Activated CD4-positive, alpha-beta memory T cell treated with anti-CD3 and anti-CD28 coated beads for 36 hours (primary cell): ENCODE measurements at regions of chr14 and their contacts with region 1.

Region 1: GRCh38 chr14:100375963-100376735 is 53.0 kb downstream of the SLC25A47 start:
- DNase-seq: peak; percentile 96
- H3K4me3 Mint-ChIP-seq: peak within 1 kb of the TSS; percentile 98
- H3K27ac Mint-ChIP-seq: peak within 1 kb of the TSS; percentile 100
- H3K4me1 Mint-ChIP-seq: peaks cover 47% of the 10 kb centered on the region
- H3K27me3 Mint-ChIP-seq: peaks cover 1% of the 10 kb centered on the region

Region 2: GRCh38 chr14:100062590-100062989 is 313.6 kb before region 1 on chr14:
- CTCF ChIA-PET with region 1: interaction called, 3 read pairs
- POLR2A ChIA-PET with region 1: interaction called, 16 read pairs
- intact Hi-C with region 1: loop called (anchors 2 kb)
- DNase-seq: peak; percentile 78
- H3K4me3 Mint-ChIP-seq: peak overlapping the region; percentile 69
- H3K27ac Mint-ChIP-seq: peak overlapping the region; percentile 98
- H3K4me1 Mint-ChIP-seq: peaks cover 80% of the 10 kb centered on the region
- H3K27me3 Mint-ChIP-seq: no peaks in the 10 kb centered on the region

Region 3: DNA sequence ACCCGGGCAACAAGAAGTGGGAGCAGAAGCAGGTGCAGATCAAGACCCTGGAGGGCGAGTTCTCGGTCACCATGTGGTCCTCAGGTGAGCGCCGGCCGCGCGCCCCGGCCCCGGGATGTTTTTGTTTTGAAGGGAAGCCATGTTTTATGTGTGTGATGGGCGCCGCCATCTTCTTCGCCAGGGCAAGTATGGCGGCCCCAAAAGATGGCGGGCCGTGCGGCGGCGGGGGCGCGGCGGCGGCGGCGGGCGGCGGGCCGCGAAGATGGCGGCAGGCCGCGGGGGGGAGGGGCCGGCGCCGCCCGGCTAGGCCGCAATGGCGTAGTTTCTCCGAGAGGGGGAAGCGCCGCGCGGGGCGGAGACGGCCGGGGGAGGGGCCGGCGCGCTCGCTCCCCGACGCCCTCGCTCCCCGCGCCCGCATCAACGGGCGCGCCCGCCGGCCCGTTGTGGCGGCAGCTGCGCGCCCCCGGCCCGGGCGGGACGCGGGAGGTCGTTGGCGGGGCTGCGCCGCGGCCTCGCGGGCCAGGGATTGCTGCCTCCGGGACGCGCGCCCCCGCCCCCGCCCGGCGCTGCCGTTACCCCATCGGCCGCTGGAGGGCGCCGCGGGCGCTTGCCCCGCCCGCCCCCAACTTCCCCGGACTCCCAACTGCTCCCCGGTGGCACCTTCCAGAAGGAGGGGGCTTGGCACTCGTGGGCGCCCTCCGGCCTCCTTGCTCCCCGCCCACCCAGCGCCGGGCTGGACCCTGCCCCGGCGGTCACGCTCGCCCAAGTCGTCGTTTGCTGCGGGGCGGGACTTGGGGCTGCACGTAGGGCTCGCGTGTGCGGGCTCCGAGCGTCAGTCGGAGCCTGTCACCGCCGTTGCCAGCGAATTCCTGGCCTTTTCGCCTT is 136.1 kb before region 1 on chr14:
- CTCF ChIA-PET with region 1: interaction called, 7 read pairs
- POLR2A ChIA-PET with region 1: interaction called, 13 read pairs
- intact Hi-C with region 1: loop called (anchors 1 kb)
- DNase-seq: peak; percentile 90
- H3K4me3 Mint-ChIP-seq: peak overlapping the region; percentile 81
- H3K27ac Mint-ChIP-seq: peak overlapping the region; percentile 89
- H3K4me1 Mint-ChIP-seq: peaks cover 54% of the 10 kb centered on the region
- H3K27me3 Mint-ChIP-seq: peaks cover 2% of the 10 kb centered on the region

Region 4: DNA sequence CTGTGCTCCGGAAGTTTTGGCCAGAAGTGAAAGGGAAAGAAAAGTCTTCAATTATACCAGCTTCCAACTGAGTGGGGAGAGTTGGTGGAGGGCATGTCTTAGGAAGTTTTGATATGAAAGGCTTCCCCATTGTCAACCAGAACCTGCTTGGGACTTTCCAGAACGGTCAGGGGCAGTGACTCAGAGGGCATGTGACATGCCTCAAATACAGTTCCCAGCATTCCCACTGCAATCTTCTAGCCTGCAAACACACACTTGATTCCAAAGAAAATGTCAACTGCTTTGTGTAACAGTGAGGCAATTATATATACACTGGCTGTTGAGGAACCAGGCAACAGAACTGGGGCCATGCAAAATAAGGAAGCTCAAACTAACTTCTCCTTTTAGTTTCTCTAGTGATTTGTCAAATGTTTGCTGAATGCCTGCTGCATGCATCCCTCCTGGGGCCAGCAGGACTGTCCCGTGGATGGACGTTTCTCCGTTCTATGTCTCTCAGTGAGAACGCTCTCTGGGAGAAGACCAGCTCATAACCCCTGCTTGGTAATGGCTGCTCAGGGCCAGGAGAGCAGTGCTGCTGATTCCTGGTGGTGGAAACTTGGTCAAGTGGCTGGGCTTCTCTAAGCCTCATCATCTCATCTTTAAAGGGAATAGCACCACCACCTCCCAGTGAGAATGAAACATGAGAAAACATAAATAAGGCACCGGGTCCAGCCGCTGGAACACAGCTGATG is 34.7 kb before region 1 on chr14:
- CTCF ChIA-PET with region 1: interaction called, 6 read pairs
- POLR2A ChIA-PET with region 1: interaction called, 5 read pairs
- intact Hi-C with region 1: loop called (anchors 1 kb)
- DNase-seq: peak; percentile 55
- H3K4me3 Mint-ChIP-seq: no peak overlapping the region
- H3K27ac Mint-ChIP-seq: peak overlapping the region; percentile 85
- H3K4me1 Mint-ChIP-seq: peaks cover 45% of the 10 kb centered on the region
- H3K27me3 Mint-ChIP-seq: no peaks in the 10 kb centered on the region

Region 5: GRCh38 chr14:101809671-101810514 is 1433.7 kb after region 1 on chr14:
- CTCF ChIA-PET with region 1: no interaction called
- POLR2A ChIA-PET with region 1: no interaction called
- intact Hi-C with region 1: loop called (anchors 10 kb)
- DNase-seq: peak; percentile 91
- H3K4me3 Mint-ChIP-seq: peak overlapping the region; percentile 86
- H3K27ac Mint-ChIP-seq: peak overlapping the region; percentile 98
- H3K4me1 Mint-ChIP-seq: peaks cover 49% of the 10 kb centered on the region
- H3K27me3 Mint-ChIP-seq: no peaks in the 10 kb centered on the region